WTC11 (cell line): ENCODE measurements at regions of chr15 and their contacts with region 1.

Region 1: GRCh38 chr15:63277038-63277892 is at the start of gene APH1B:
- DNase-seq: peak; percentile 84
- ATAC-seq: peak; percentile 85
- H3K4me3 Mint-ChIP-seq: peak within 1 kb of the TSS; percentile 85
- H3K27ac Mint-ChIP-seq: peak within 1 kb of the TSS; percentile 89
- H3K4me1 Mint-ChIP-seq: peaks cover 34% of the 10 kb centered on the region
- H3K27me3 Mint-ChIP-seq: peaks cover 4% of the 10 kb centered on the region
- CTCF ChIP-seq: no peak
- total RNA-seq, gene APH1B: 22.0 to 27.5 TPM (median 25.0 TPM) in 3 replicates

Region 2: GRCh38 chr15:63198371-63199250 is 78.7 kb before region 1 on chr15:
- CTCF ChIA-PET with region 1: no interaction called
- POLR2A ChIA-PET with region 1: no interaction called
- DNase-seq: no peak
- ATAC-seq: no peak
- H3K4me3 Mint-ChIP-seq: no peak overlapping the region
- H3K27ac Mint-ChIP-seq: peak overlapping the region; percentile 75; the same call in 1 of the 2 replicates
- H3K4me1 Mint-ChIP-seq: peaks cover 67% of the 10 kb centered on the region
- H3K27me3 Mint-ChIP-seq: no peaks in the 10 kb centered on the region
- CTCF ChIP-seq: no peak

Region 3: DNA sequence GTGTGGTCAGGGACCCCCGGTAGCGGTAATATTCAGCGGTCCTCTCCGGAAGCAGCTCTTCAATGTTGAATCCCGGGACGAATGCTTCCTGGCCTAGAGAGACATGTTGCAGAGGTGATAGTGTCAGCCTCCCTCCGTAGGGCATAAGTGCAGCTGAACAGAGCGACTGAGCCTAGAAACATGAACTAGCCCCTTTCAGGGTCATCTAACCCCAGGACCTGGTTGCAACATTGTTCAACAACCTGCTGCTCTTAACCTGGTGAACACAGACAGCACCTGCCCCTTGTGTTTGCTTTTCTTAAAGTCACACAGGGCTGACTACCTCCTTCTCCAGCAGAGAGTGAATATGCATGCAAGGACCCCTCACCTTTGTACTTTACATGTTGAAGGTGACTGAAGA is 63.1 kb after region 1 on chr15:
- CTCF ChIA-PET with region 1: no interaction called
- POLR2A ChIA-PET with region 1: interaction called, 10 read pairs
- DNase-seq: no peak
- ATAC-seq: peak; percentile 41
- H3K4me3 Mint-ChIP-seq: peak overlapping the region; percentile 44
- H3K27ac Mint-ChIP-seq: peak overlapping the region; percentile 77
- H3K4me1 Mint-ChIP-seq: peaks cover 54% of the 10 kb centered on the region
- H3K27me3 Mint-ChIP-seq: no peaks in the 10 kb centered on the region; the same call in 1 of the 2 replicates
- CTCF ChIP-seq: no peak

Region 4: GRCh38 chr15:63351170-63351569 is 73.9 kb after region 1 on chr15:
- CTCF ChIA-PET with region 1: no interaction called
- POLR2A ChIA-PET with region 1: no interaction called
- DNase-seq: no peak
- ATAC-seq: no peak
- H3K4me3 Mint-ChIP-seq: no peak overlapping the region
- H3K27ac Mint-ChIP-seq: no peak overlapping the region
- H3K4me1 Mint-ChIP-seq: peaks cover 15% of the 10 kb centered on the region
- H3K27me3 Mint-ChIP-seq: no peaks in the 10 kb centered on the region
- CTCF ChIP-seq: no peak